ENCODE measurements at regions of chr3 and their contacts with region 1.

Region 1: DNA sequence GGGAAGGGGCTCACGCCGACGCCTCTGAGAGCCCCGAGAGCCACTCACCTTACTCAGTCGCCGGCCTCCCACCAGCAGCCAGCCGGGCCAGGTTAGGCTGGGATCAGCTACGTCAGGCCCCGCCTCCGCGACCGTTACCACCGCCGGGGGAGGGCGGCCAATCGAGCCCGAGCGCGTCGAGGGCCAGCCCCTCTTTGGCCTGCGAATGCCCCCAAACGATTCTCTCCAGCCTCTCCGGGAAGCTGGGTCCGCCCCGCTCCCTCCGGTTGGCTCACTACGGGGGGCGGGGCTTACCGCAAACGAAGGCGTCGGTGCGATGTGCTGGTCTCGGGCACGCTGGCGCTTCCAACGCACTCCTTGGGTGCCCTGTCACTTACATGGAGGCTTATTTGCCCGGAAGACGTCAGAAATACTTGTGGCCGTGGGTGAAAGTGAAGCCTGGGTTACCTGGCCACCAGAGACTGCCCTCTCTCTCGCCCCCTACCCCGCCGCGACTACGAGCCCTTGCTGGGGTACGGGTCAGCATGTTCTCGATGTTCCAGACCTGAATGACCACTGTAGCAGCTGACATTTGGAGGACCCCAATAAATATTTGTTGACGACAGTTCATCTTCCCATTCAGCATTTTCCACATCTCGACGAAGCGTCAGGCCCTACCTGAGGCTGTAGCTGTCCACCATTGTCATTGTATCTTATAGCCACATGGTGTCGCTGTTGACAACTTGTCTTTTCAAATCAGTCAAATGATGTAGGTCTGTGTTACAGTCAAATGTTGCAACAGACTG is at the start of gene CEP70:
- DNase-seq: peak; percentile 96
- H3K4me3 Mint-ChIP-seq: peak within 1 kb of the TSS; percentile 81
- H3K27ac Mint-ChIP-seq: peak within 1 kb of the TSS; percentile 69
- H3K4me1 Mint-ChIP-seq: no peaks in the 10 kb centered on the region
- H3K27me3 Mint-ChIP-seq: no peaks in the 10 kb centered on the region
- CTCF ChIP-seq: peak; percentile 81
- total RNA-seq, gene CEP70: 21.3 and 25.9 TPM in 2 replicates

Region 2: DNA sequence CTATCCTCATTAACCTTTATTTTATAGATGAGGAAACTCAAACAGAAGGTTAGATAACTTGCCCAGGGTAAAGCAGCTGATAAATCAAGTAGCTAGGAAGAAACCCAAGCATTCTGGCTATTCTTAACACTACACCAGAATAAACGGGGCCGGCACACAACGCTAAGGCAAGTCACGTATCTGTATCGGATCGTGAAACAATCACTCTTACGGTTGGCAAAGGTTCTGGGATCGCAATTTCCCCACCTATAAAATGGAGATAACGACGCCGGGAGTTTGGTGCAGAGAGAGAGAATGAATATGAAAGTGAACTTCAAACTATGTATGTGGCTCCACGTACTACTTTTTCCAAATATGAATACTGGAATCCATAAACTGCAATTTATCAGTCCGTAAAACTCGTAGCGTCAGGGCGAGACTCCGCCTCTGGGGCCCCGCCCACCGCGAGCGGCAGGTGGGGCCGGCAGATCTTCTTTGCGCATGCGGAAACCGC is 407.5 kb before region 1 on chr3:
- CTCF ChIA-PET with region 1: no interaction called
- POLR2A ChIA-PET with region 1: interaction called, 5 read pairs
- intact Hi-C with region 1: loop called (anchors 10 kb)
- DNase-seq: peak; percentile 87
- H3K4me3 Mint-ChIP-seq: peak overlapping the region; percentile 90
- H3K27ac Mint-ChIP-seq: peak overlapping the region; percentile 95
- H3K4me1 Mint-ChIP-seq: peaks cover 34% of the 10 kb centered on the region
- H3K27me3 Mint-ChIP-seq: no peaks in the 10 kb centered on the region
- CTCF ChIP-seq: no peak

Region 3: DNA sequence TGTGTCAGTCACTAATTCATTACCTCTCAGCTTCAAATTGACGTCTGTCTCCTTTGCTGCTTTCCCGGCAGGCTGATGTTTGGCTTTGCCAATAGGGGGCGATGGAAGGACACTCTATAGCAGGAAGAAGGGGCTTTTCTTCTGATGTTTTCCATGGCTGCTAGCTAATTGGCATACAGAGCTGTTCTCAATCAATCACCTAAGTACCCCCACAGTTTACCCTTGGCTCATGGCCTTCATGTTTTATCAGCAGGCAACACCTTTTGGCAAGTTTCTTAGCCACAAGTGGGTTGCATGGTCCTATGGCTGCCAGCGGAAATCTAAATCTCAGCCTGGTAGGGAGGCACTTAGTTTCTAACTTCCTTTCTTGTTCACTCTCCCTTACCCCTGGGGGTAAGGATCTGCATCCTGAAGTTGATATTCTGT is 114.9 kb before region 1 on chr3:
- CTCF ChIA-PET with region 1: interaction called, 7 read pairs
- POLR2A ChIA-PET with region 1: no interaction called
- intact Hi-C with region 1: loop called (anchors 1 kb)
- DNase-seq: peak; percentile 62
- H3K4me3 Mint-ChIP-seq: no peak overlapping the region
- H3K27ac Mint-ChIP-seq: peak overlapping the region; percentile 57
- H3K4me1 Mint-ChIP-seq: peaks cover 6% of the 10 kb centered on the region
- H3K27me3 Mint-ChIP-seq: no peaks in the 10 kb centered on the region
- CTCF ChIP-seq: peak; percentile 88

Region 4: DNA sequence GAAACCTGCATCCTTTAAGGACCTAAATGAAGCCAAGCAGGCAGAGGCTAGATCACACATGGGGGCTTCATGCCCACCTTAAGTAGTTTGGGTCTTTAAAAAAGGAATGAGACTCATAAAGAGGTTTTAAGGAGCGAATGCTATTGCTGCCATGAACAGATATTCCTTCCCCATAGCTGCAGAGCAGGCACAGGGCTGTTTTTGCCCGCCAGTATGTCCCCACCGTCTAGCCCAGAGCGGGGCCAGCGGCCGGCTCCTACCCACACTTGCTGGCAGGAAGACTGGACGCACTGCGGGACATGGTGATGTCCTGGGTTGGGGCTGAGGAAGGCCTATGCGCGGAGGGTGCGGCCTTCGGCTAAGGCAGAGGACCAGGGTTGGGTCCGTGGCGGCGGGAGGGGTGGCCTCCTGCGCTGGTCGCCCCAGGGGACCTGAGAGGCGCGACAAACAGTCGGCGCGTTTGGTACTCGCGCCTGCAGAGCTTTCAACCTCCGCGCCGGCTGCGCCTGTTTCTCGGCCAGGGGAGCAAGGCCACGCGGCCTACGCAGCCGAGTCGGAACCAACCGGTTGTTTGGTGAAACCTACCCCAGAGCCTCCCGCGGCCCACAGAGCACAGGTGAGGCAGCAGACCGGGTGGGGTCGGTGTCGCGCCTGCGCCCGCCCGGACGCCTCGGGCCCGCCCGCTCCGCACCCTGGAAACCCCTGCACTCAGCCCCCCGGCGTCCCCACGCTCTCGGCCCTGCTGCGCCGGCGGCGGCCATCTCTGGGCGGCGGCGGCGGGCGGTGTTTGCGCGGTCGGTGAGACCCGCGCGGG is 14.2 kb after region 1 on chr3 and contains the start of gene FAIM:
- CTCF ChIA-PET with region 1: interaction called, 13 read pairs
- POLR2A ChIA-PET with region 1: interaction called, 17 read pairs
- intact Hi-C with region 1: no loop called
- DNase-seq: peak; percentile 68
- H3K4me3 Mint-ChIP-seq: peak within 1 kb of the TSS; percentile 81
- H3K27ac Mint-ChIP-seq: peak within 1 kb of the TSS; percentile 87
- H3K4me1 Mint-ChIP-seq: peaks cover 12% of the 10 kb centered on the region
- H3K27me3 Mint-ChIP-seq: no peaks in the 10 kb centered on the region
- CTCF ChIP-seq: no peak
- total RNA-seq, gene FAIM: 14.1 and 15.0 TPM in 2 replicates

Region 5: DNA sequence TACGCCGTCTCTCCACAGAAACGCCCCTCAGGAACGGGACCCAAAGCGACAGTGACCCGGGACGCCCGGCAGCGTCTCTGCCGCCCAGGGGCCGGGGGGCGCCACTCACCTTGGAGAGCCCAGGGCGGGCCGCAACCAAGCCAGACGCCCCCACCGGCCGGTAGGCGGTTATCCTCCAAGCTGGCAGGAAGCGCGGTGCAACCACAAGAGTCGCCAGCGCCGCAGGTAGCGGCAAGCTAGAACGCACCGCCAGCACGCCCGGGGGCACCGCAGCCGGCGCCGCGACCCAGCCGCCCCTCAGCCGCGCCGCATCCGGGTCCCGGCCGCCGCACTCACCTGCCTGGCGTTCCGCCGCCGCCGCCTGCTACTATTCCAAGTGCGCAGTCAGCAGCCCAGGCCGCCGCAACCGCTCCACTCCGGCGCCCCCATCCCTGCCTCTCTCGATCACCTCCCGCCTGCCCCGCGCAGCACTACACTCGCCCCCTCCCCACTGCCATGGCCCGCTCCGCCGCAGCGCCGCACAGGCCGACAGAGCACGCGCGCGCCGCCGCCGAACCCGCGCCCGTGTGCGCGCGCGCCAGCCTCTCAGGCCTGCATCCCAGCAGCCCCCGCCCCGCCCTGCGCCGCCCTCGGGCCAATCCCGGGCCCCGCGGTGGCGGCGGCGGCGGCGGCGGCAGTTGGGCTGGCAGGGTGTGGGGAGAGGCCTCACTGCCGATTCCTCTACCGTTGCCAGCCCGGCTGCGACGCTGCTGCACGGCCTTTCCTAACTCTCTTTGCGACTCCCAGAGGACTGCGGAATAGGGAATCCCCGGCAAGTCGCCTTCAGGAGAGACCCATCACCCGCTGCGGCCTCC is 240.2 kb after region 1 on chr3 and contains the start of gene PIK3CB:
- CTCF ChIA-PET with region 1: interaction called, 3 read pairs
- POLR2A ChIA-PET with region 1: interaction called, 7 read pairs
- intact Hi-C with region 1: loop called (anchors 10 kb)
- DNase-seq: peak; percentile 85
- H3K4me3 Mint-ChIP-seq: peak within 1 kb of the TSS; percentile 82
- H3K27ac Mint-ChIP-seq: peak within 1 kb of the TSS; percentile 90
- H3K4me1 Mint-ChIP-seq: peaks cover 23% of the 10 kb centered on the region
- H3K27me3 Mint-ChIP-seq: no peaks in the 10 kb centered on the region
- CTCF ChIP-seq: no peak
- total RNA-seq, gene PIK3CB: 21.0 and 21.1 TPM in 2 replicates

Region 6: GRCh38 chr3:138862924-138863775 is 268.8 kb after region 1 on chr3:
- CTCF ChIA-PET with region 1: no interaction called
- POLR2A ChIA-PET with region 1: no interaction called
- intact Hi-C with region 1: no loop called
- DNase-seq: peak; percentile 94
- H3K4me3 Mint-ChIP-seq: peak overlapping the region; percentile 46
- H3K27ac Mint-ChIP-seq: peak overlapping the region; percentile 89
- H3K4me1 Mint-ChIP-seq: peaks cover 20% of the 10 kb centered on the region
- H3K27me3 Mint-ChIP-seq: no peaks in the 10 kb centered on the region
- CTCF ChIP-seq: no peak

Region 7: GRCh38 chr3:138935848-138936740 is 341.8 kb after region 1 on chr3:
- CTCF ChIA-PET with region 1: interaction called, 16 read pairs
- POLR2A ChIA-PET with region 1: interaction called, 3 read pairs
- intact Hi-C with region 1: no loop called
- DNase-seq: peak; percentile 59
- H3K4me3 Mint-ChIP-seq: peak overlapping the region; percentile 68
- H3K27ac Mint-ChIP-seq: no peak overlapping the region
- H3K4me1 Mint-ChIP-seq: no peaks in the 10 kb centered on the region
- H3K27me3 Mint-ChIP-seq: peaks cover 16% of the 10 kb centered on the region
- CTCF ChIP-seq: peak; percentile 84

Measured in MCF 10A (cell line).